ENCODE measurements at regions of chr14 and their contacts with region 1.

Region 1: DNA sequence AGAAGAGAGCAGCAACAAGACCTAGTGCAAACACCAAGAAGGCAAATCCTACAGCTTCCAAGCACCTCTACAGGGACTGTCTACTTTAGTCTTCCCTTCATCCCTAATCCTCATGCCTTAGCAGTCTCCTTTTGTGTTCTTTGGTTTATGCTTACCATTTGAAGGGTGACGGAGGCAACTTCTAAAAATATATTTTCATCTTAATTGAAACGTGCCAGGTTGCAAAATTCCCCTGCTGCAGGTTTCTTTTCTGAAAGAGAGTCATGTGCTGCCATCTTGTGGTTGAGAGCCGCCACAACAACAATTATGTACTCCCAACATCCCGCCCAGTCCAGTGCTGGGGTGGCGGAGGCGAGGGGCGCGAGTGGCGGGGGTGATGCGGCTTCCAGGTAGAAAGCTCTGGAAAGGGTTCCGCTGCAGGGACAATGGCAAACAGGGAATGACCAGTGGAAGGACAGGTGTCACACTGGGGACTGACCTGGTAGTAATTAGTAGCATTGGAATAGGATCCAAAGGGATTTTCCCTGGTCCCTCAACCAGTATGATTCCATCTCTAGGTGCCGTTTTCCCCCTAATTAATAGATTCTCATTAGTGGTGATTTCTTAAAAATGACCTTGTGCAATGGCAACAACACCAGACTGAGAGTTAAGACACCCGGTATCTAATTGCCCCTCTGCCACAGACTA is 80.3 kb upstream of the GNG2 start:
- DNase-seq: peak; percentile 21
- ATAC-seq: peak; percentile 87
- H3K4me3 ChIP-seq: no peak overlapping the region
- H3K27ac ChIP-seq: no peak overlapping the region
- H3K4me1 ChIP-seq: no peaks in the 10 kb centered on the region
- H3K27me3 ChIP-seq: no peaks in the 10 kb centered on the region
- CTCF ChIP-seq: peak; percentile 73 to 83 (median 73)
- EP300 ChIP-seq: no peak
- POLR2A ChIP-seq: no peak
- RAD21 ChIP-seq: peak; percentile 88

Region 2: GRCh38 chr14:51157012-51157411 is 623.1 kb before region 1 on chr14:
- CTCF ChIA-PET with region 1: interaction called, 4 read pairs
- POLR2A ChIA-PET with region 1: no interaction called
- RAD21 ChIA-PET with region 1: no interaction called
- SMC1A ChIA-PET with region 1: no interaction called
- in situ Hi-C with region 1: loop called (anchors 10 kb)
- intact Hi-C with region 1: loop called (anchors 5 kb)
- DNase-seq: no peak
- ATAC-seq: peak; percentile 92
- H3K4me3 ChIP-seq: no peak overlapping the region
- H3K27ac ChIP-seq: no peak overlapping the region
- H3K4me1 ChIP-seq: peaks cover 7% of the 10 kb centered on the region
- H3K27me3 ChIP-seq: no peaks in the 10 kb centered on the region
- CTCF ChIP-seq: peak; percentile 57 to 64 (median 63)
- EP300 ChIP-seq: no peak
- POLR2A ChIP-seq: no peak
- RAD21 ChIP-seq: peak; percentile 74

Region 3: GRCh38 chr14:51283402-51284085 is 496.6 kb before region 1 on chr14:
- CTCF ChIA-PET with region 1: interaction called, 75 read pairs
- POLR2A ChIA-PET with region 1: no interaction called
- RAD21 ChIA-PET with region 1: interaction called, 7 read pairs
- SMC1A ChIA-PET with region 1: interaction called, 16 read pairs
- in situ Hi-C with region 1: loop called (anchors 10 kb)
- intact Hi-C with region 1: loop called (anchors 1 kb)
- DNase-seq: no peak
- ATAC-seq: peak; percentile 55; the same call in 2 of the 3 replicates
- H3K4me3 ChIP-seq: no peak overlapping the region
- H3K27ac ChIP-seq: no peak overlapping the region
- H3K4me1 ChIP-seq: peaks cover 8% of the 10 kb centered on the region
- H3K27me3 ChIP-seq: no peaks in the 10 kb centered on the region
- CTCF ChIP-seq: peak; percentile 53 to 74 (median 55); a peak in 5 of 6 replicates
- EP300 ChIP-seq: no peak
- POLR2A ChIP-seq: no peak
- RAD21 ChIP-seq: peak; percentile 71

Region 4: GRCh38 chr14:51369814-51370213 is 410.3 kb before region 1 on chr14:
- CTCF ChIA-PET with region 1: interaction called, 6 read pairs
- POLR2A ChIA-PET with region 1: no interaction called
- RAD21 ChIA-PET with region 1: no interaction called
- SMC1A ChIA-PET with region 1: interaction called, 4 read pairs
- in situ Hi-C with region 1: loop called (anchors 10 kb)
- intact Hi-C with region 1: loop called (anchors 2 kb)
- DNase-seq: no peak
- ATAC-seq: peak; percentile 42; the same call in 2 of the 3 replicates
- H3K4me3 ChIP-seq: no peak overlapping the region
- H3K27ac ChIP-seq: no peak overlapping the region
- H3K4me1 ChIP-seq: no peaks in the 10 kb centered on the region
- H3K27me3 ChIP-seq: no peaks in the 10 kb centered on the region
- CTCF ChIP-seq: peak; percentile 28 to 45 (median 44); a peak in 5 of 6 replicates
- EP300 ChIP-seq: no peak
- POLR2A ChIP-seq: no peak
- RAD21 ChIP-seq: peak; percentile 61

Region 5: DNA sequence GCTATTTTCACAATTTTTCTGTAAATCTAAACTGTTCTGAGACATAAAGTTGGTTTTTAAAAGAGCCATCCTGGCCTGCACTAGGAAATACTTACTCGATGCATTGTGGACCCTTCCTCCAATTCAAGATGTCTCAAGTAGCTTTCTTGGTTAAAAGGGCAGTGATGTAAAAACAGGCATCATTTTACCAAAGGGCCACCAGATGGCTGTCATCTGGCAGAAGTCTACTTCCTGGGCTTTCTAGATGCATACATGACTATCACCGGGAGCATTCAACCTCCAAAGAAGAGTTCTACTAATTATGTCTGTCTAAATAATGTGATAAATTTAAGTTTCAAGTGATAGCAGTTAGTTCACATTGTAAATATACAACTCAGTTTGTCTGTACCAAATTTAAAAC is 225.2 kb before region 1 on chr14:
- CTCF ChIA-PET with region 1: no interaction called
- POLR2A ChIA-PET with region 1: no interaction called
- RAD21 ChIA-PET with region 1: no interaction called
- SMC1A ChIA-PET with region 1: no interaction called
- in situ Hi-C with region 1: no loop called
- intact Hi-C with region 1: loop called (anchors 5 kb)
- DNase-seq: no peak
- ATAC-seq: peak; percentile 37; the same call in 2 of the 3 replicates
- H3K4me3 ChIP-seq: no peak overlapping the region
- H3K27ac ChIP-seq: no peak overlapping the region
- H3K4me1 ChIP-seq: no peaks in the 10 kb centered on the region
- H3K27me3 ChIP-seq: peaks cover 2 to 3% of the 10 kb centered on the region in 2 experiments; a peak in 2 of 4 replicates
- CTCF ChIP-seq: peak in 2 of 3 experiments; percentile 28 to 29; a peak in 4 of 6 replicates
- EP300 ChIP-seq: no peak
- POLR2A ChIP-seq: no peak
- RAD21 ChIP-seq: peak; percentile 55

Region 6: DNA sequence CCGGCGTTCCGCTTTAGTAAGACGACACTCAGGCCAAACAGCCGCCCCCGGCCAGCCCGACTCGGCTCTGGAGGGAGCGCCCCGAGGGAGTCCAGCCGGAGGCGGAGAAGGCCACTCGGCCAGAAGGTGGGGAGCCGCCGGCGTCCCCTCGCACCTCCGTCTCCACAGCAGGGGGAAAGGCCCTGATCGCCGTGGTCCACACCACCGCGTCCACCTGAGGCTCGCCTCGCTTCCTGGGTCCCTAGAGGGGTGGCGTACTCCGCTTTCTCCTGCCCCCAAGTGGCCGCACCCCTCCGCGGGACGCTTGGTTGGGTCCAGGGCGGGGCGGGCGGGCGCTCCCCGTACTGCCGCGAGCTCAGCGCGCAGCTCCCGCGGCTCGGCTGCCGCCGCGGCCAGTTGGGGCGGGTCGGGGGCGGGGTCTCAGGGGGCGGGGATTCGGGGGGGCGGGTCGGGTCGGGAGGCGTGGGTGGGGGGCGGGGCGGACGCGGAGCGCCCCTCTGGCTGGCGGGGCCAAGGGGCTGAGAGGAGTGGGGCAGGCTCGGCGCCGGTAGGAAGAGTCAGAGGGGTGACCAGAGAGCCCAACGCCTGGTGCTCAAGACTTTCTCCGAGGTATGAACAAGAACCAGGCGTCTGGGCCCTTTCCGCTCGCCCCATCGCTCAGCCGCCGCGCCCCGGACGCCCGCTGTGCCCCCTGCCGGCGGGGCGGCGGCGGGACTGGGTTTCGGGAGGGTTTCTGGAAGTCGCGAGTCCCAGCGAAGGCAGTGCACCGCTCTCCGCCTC is 128.6 kb before region 1 on chr14 and contains the start of gene FRMD6:
- CTCF ChIA-PET with region 1: interaction called, 4 read pairs
- POLR2A ChIA-PET with region 1: no interaction called
- RAD21 ChIA-PET with region 1: interaction called, 3 read pairs
- SMC1A ChIA-PET with region 1: no interaction called
- in situ Hi-C with region 1: no loop called
- intact Hi-C with region 1: loop called (anchors 2 kb)
- DNase-seq: peak; percentile 26
- ATAC-seq: peak; percentile 90
- H3K4me3 ChIP-seq: peak within 1 kb of the TSS; percentile 84
- H3K27ac ChIP-seq: peak within 1 kb of the TSS; percentile 41
- H3K4me1 ChIP-seq: no peaks in the 10 kb centered on the region
- H3K27me3 ChIP-seq: peaks cover 3 to 9% of the 10 kb centered on the region in 2 experiments; a peak in 3 of 4 replicates
- CTCF ChIP-seq: peak; percentile 54 to 80 (median 68)
- EP300 ChIP-seq: no peak
- POLR2A ChIP-seq: peak; percentile 82; the same call in 1 of the 2 replicates
- RAD21 ChIP-seq: peak; percentile 59
- polyA plus RNA-seq, gene FRMD6: 1.1 to 1.6 TPM

Region 7: GRCh38 chr14:51697848-51698247 is 82.3 kb before region 1 on chr14:
- CTCF ChIA-PET with region 1: no interaction called
- POLR2A ChIA-PET with region 1: no interaction called
- RAD21 ChIA-PET with region 1: no interaction called
- SMC1A ChIA-PET with region 1: no interaction called
- in situ Hi-C with region 1: no loop called
- intact Hi-C with region 1: no loop called
- DNase-seq: no peak
- ATAC-seq: no peak
- H3K4me3 ChIP-seq: no peak overlapping the region
- H3K27ac ChIP-seq: no peak overlapping the region
- H3K4me1 ChIP-seq: no peaks in the 10 kb centered on the region
- H3K27me3 ChIP-seq: no peaks in the 10 kb centered on the region
- CTCF ChIP-seq: no peak
- EP300 ChIP-seq: no peak
- POLR2A ChIP-seq: no peak
- RAD21 ChIP-seq: no peak

Region 8: DNA sequence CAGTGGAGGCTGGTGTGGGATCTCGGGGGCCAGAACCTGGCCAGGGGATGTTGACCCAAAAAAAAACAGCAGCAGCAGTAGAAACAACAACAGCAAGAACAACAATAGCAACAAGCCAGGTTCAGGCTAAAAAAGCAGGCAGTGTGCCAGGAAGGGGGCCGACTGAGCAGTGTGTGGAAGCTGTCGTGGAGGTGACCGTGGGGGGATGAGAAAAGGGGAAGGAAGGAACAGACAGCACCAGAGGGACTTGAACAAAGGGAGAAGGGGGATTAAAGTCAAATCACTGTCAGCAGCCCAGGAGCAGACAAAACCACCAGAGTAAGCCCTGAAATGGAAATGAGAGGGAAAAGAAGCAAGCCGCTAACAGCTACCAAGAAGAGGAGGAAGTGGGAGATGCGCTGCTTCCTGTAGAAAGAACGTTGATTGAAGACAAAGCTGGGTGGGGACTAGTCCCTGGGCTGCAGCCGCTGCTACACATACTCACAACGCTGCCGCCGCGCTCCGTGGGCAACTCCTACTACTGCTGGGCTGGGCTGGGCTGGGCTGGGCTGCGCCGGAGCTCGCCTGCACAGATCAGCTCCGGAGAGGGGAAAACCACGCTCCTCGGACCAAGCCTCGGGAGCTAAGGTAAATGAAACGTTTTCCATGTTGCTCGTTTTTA is 80.1 kb after region 1 on chr14 and contains the start of gene GNG2:
- CTCF ChIA-PET with region 1: interaction called, 3 read pairs
- POLR2A ChIA-PET with region 1: no interaction called
- RAD21 ChIA-PET with region 1: no interaction called
- SMC1A ChIA-PET with region 1: no interaction called
- in situ Hi-C with region 1: no loop called
- intact Hi-C with region 1: loop called (anchors 5 kb)
- DNase-seq: peak; percentile 71
- ATAC-seq: peak; percentile 88
- H3K4me3 ChIP-seq: peak within 1 kb of the TSS; percentile 90
- H3K27ac ChIP-seq: peak within 1 kb of the TSS; percentile 82
- H3K4me1 ChIP-seq: peaks cover 12% of the 10 kb centered on the region
- H3K27me3 ChIP-seq: no peaks in the 10 kb centered on the region
- CTCF ChIP-seq: no peak
- EP300 ChIP-seq: no peak
- POLR2A ChIP-seq: peak; percentile 94
- RAD21 ChIP-seq: no peak
- polyA plus RNA-seq, gene GNG2: 31.6 to 42.0 TPM

Measured in GM12878 (cell line).